ENCODE measurements at regions of chr17 and their contacts with region 1.

Region 1: DNA sequence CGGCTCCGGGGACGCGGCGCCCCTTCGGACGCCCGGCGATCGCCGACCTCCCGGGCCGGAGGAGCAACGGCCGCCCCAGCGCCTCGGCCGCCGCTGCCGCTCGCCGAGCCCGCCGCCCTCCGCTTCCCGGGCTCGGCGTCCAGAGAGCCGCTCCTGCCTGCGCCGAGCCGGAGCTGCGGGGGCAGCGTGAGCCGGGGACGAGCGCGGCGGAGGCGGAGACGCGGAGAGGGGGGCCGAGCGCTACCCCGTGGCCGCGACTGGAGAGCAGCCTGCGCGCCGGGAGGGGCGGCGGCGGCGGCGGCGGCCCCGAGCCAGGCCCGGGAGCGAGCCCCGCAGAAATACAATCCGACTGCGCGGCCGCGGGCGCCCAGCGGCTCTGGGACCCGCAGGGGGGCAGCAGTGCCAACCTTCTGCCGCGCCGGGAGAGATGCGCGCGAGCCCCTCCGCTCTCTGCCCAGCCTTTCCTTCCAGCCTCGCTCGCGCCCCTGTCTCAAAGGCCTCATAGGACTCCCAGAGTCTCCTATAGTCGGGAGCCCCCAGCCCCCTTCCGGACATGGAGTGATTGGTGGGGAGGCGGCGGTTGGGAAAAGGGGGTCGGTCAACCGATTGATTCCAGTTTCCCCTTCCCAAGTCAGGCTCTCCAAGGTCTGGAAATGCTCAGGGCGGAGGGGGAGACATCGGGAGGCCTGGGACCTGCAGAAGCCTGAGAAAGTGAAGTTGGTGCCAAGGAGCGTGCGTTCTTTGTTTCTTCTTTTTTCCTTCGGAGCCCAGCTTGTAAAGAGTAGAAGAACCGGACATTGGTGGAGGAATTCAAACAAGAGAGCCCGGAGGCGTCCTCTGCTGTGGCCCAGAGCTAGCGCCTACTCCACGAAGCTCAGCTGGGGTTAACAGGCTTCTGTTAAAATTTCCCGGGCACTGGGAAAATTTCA is 1.1 kb upstream of the SDK2 start:
- DNase-seq: no peak
- H3K4me3 ChIP-seq: peak overlapping the region; percentile 67 to 87 (median 80)
- H3K27ac ChIP-seq: no peak overlapping the region
- H3K4me1 ChIP-seq: peaks cover 4 to 19% (median 12%) of the 10 kb centered on the region in 4 experiments
- H3K27me3 ChIP-seq: peaks cover 5 to 47% (median 37%) of the 10 kb centered on the region in 4 experiments
- CTCF ChIP-seq: peak in 1 of 3 experiments; percentile 35; a peak in 2 of 4 replicates
- EP300 ChIP-seq: peak in 1 of 2 experiments; percentile 72; a peak in 1 of 3 replicates
- POLR2A ChIP-seq: no peak
- RAD21 ChIP-seq: peak in 1 of 2 experiments; percentile 3; a peak in 3 of 4 replicates

Region 2: GRCh38 chr17:73429440-73430164 is 215.7 kb before region 1 on chr17:
- CTCF ChIA-PET with region 1: interaction called, 34 read pairs
- POLR2A ChIA-PET with region 1: interaction called, 3 read pairs
- DNase-seq: peak; percentile 46 to 98
- H3K4me3 ChIP-seq: no peak overlapping the region
- H3K27ac ChIP-seq: no peak overlapping the region
- H3K4me1 ChIP-seq: peaks cover 0 to 6% (median 1%) of the 10 kb centered on the region in 4 experiments; a peak in 3 of 7 replicates
- H3K27me3 ChIP-seq: no peaks in the 10 kb centered on the region
- CTCF ChIP-seq: peak; percentile 92 to 97 (median 92)
- EP300 ChIP-seq: no peak
- POLR2A ChIP-seq: no peak
- RAD21 ChIP-seq: peak; percentile 96 to 98

Region 3: GRCh38 chr17:73595479-73595878 is 49.8 kb before region 1 on chr17:
- CTCF ChIA-PET with region 1: interaction called, 40 read pairs
- POLR2A ChIA-PET with region 1: no interaction called
- DNase-seq: peak in 1 of 2 experiments; percentile 85
- H3K4me3 ChIP-seq: no peak overlapping the region
- H3K27ac ChIP-seq: no peak overlapping the region
- H3K4me1 ChIP-seq: peaks cover 0 to 5% (median 2%) of the 10 kb centered on the region in 4 experiments; a peak in 5 of 7 replicates
- H3K27me3 ChIP-seq: no peaks in the 10 kb centered on the region
- CTCF ChIP-seq: peak; percentile 68 to 74 (median 71)
- EP300 ChIP-seq: no peak
- POLR2A ChIP-seq: no peak
- RAD21 ChIP-seq: peak; percentile 76 to 87

Region 4: GRCh38 chr17:73667181-73667959 is 22.1 kb after region 1 on chr17:
- CTCF ChIA-PET with region 1: interaction called, 10 read pairs
- POLR2A ChIA-PET with region 1: no interaction called
- DNase-seq: no peak
- H3K4me3 ChIP-seq: no peak overlapping the region
- H3K27ac ChIP-seq: no peak overlapping the region
- H3K4me1 ChIP-seq: no peaks in the 10 kb centered on the region; a peak in 1 of 7 replicates
- H3K27me3 ChIP-seq: no peaks in the 10 kb centered on the region
- CTCF ChIP-seq: no peak
- EP300 ChIP-seq: no peak
- POLR2A ChIP-seq: no peak
- RAD21 ChIP-seq: no peak

Region 5: DNA sequence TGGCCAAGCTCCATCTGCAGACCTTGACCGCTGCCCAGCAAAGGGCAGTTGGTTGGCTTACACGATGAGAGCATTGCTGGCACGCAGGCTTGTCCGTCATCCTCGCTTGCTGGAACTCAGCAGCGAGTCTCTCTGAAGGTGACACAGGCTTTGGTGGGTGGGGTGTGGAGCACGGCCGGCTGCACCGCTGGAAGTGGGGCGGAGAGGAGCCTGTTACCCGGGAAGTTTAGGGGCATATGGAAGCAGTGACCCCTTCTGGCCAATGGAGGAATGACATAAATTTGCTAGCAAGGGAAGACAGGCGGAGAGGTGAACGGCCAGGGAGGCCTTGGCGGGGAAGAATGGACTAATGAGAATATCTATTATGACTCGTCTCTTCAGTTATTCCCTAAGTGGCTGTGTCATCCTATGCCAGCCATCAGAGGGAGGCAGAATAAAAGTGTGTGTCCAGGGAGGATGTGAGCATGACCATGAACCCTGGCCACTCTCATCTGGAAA is 64.8 kb after region 1 on chr17:
- CTCF ChIA-PET with region 1: interaction called, 175 read pairs
- POLR2A ChIA-PET with region 1: no interaction called
- DNase-seq: peak; percentile 39 to 93
- H3K4me3 ChIP-seq: no peak overlapping the region; a peak in 1 of 8 replicates
- H3K27ac ChIP-seq: no peak overlapping the region
- H3K4me1 ChIP-seq: peaks cover 0 to 4% (median 3%) of the 10 kb centered on the region in 4 experiments; a peak in 5 of 7 replicates
- H3K27me3 ChIP-seq: peaks cover 0 to 4% (median under 1%) of the 10 kb centered on the region in 4 experiments; a peak in 3 of 7 replicates
- CTCF ChIP-seq: peak; percentile 76 to 89 (median 85)
- EP300 ChIP-seq: no peak
- POLR2A ChIP-seq: no peak
- RAD21 ChIP-seq: peak; percentile 93 to 95

Region 6: GRCh38 chr17:73806768-73807167 is 161.5 kb after region 1 on chr17:
- CTCF ChIA-PET with region 1: no interaction called
- POLR2A ChIA-PET with region 1: no interaction called
- DNase-seq: no peak
- H3K4me3 ChIP-seq: no peak overlapping the region
- H3K27ac ChIP-seq: no peak overlapping the region
- H3K4me1 ChIP-seq: peaks cover 0 to 8% (median 6%) of the 10 kb centered on the region in 4 experiments; a peak in 4 of 7 replicates
- H3K27me3 ChIP-seq: no peaks in the 10 kb centered on the region; a peak in 2 of 7 replicates
- CTCF ChIP-seq: no peak
- EP300 ChIP-seq: no peak
- POLR2A ChIP-seq: no peak
- RAD21 ChIP-seq: no peak

Region 7: GRCh38 chr17:73841431-73842060 is 196.2 kb after region 1 on chr17:
- CTCF ChIA-PET with region 1: interaction called, 24 read pairs
- POLR2A ChIA-PET with region 1: no interaction called
- DNase-seq: peak in 1 of 2 experiments; percentile 59
- H3K4me3 ChIP-seq: no peak overlapping the region
- H3K27ac ChIP-seq: no peak overlapping the region
- H3K4me1 ChIP-seq: no peaks in the 10 kb centered on the region
- H3K27me3 ChIP-seq: no peaks in the 10 kb centered on the region
- CTCF ChIP-seq: peak; percentile 91 to 96 (median 93)
- EP300 ChIP-seq: no peak
- POLR2A ChIP-seq: no peak
- RAD21 ChIP-seq: peak; percentile 97